Activated naive CD4-positive, alpha-beta T cell treated with anti-CD3 and anti-CD28 coated beads for 36 hours (primary cell): ENCODE measurements at regions of chr11 and their contacts with region 1.

Region 1: DNA sequence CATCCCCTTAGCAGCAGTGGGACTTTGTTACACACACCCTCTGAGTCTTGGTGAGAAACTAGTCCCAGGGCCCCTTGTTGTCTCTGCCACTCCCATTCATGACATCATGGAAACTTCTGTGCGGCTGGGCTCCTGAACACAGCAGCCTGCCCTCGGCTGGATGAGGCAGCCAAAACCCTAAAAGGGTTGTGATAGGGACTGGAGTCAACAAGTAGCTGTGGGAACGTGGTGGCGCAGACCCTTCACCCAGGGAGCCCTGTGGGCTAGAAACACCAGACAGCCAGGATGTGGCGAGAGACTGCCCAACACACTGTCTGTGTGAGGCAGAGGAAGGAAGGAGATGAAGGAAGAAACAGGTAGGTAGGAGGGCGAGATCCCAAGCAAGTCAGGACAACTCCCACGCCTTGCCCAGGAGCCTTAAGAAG is 3.9 kb downstream of the CD3D start:
- DNase-seq: peak; percentile 97
- H3K4me3 Mint-ChIP-seq: peak overlapping the region; percentile 81
- H3K27ac Mint-ChIP-seq: peak overlapping the region; percentile 100
- H3K4me1 Mint-ChIP-seq: peaks cover 43% of the 10 kb centered on the region
- H3K27me3 Mint-ChIP-seq: no peaks in the 10 kb centered on the region

Region 2: GRCh38 chr11:117107701-117108590 is 1230.7 kb before region 1 on chr11:
- CTCF ChIA-PET with region 1: no interaction called
- intact Hi-C with region 1: no loop called
- DNase-seq: no peak
- H3K4me3 Mint-ChIP-seq: no peak overlapping the region
- H3K27ac Mint-ChIP-seq: no peak overlapping the region
- H3K4me1 Mint-ChIP-seq: peaks cover 2% of the 10 kb centered on the region
- H3K27me3 Mint-ChIP-seq: no peaks in the 10 kb centered on the region

Region 3: GRCh38 chr11:118227865-118228785 is 110.5 kb before region 1 on chr11:
- CTCF ChIA-PET with region 1: interaction called, 3 read pairs
- intact Hi-C with region 1: loop called (anchors 1 kb)
- DNase-seq: peak; percentile 30
- H3K4me3 Mint-ChIP-seq: peak overlapping the region; percentile 3
- H3K27ac Mint-ChIP-seq: peak overlapping the region; percentile 89
- H3K4me1 Mint-ChIP-seq: peaks cover 20% of the 10 kb centered on the region
- H3K27me3 Mint-ChIP-seq: no peaks in the 10 kb centered on the region

Region 4: GRCh38 chr11:118304568-118305248 is 33.9 kb before region 1 on chr11 and contains the start of gene CD3E:
- CTCF ChIA-PET with region 1: interaction called, 110 read pairs
- intact Hi-C with region 1: loop called (anchors 1 kb)
- DNase-seq: peak; percentile 88
- H3K4me3 Mint-ChIP-seq: peak within 1 kb of the TSS; percentile 98
- H3K27ac Mint-ChIP-seq: peak within 1 kb of the TSS; percentile 100
- H3K4me1 Mint-ChIP-seq: peaks cover 68% of the 10 kb centered on the region
- H3K27me3 Mint-ChIP-seq: no peaks in the 10 kb centered on the region
- total RNA-seq, gene CD3E: 377 to 415 TPM

Region 5: DNA sequence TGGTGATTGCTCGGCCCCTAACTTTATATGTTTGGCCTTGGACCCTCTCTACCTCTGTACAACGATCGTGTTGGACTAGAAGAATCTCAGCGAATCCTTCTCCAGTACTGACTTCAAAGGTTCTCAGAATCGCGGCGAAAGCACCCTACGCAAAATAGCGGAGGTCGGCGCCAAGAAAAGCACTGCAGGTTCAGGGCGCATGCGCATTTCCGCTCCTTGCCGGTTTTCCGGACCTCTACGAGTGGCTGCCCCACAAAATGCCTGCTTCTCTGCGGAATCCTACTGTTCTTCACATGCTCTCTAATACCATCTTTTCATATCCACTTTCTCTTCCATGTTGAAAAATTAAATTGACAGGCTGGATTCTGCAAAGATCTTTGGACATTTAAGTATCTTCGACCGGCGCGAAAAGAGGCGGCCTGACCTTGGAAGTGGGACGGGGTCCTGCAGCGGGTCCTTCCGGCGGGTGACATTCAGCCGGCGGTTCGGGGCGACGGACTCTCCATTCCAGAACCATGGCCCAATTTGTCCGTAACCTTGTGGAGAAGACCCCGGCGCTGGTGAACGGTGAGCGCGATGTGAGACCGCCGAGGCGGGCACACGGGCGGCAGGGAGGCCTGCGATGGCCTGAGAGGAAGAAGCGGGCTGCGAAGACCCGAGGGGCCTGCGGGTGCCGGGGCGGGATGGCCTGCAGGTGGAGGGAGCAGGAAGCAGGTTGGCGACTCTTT is 62.7 kb after region 1 on chr11 and contains the start of gene ATP5MG:
- CTCF ChIA-PET with region 1: no interaction called
- intact Hi-C with region 1: loop called (anchors 2 kb)
- DNase-seq: peak; percentile 97
- H3K4me3 Mint-ChIP-seq: peak within 1 kb of the TSS; percentile 95
- H3K27ac Mint-ChIP-seq: peak within 1 kb of the TSS; percentile 98
- H3K4me1 Mint-ChIP-seq: peaks cover 58% of the 10 kb centered on the region
- H3K27me3 Mint-ChIP-seq: no peaks in the 10 kb centered on the region
- total RNA-seq, gene ATP5MG: 279 to 284 TPM

Region 6: DNA sequence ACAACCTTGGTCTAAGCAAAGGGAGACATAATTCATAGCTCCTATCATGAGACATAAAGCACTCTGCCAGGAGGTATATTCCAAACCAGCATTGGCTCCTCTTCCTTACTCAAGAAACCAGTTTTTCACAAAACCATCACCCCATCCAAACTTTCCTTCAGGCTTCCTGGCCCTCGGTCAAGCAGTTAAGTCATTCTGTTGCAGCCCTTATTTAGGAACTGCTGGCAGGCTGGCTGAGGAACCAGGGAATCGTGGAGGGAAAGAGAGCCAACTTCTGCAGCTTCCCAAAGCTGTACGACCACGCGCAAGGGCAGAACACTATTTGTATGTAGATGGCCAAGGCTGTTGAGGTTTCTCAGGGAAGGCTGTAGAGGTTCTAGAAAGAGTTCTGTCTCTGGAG is 226.4 kb after region 1 on chr11:
- CTCF ChIA-PET with region 1: no interaction called
- intact Hi-C with region 1: no loop called
- DNase-seq: no peak
- H3K4me3 Mint-ChIP-seq: peak overlapping the region; percentile 70
- H3K27ac Mint-ChIP-seq: no peak overlapping the region
- H3K4me1 Mint-ChIP-seq: peaks cover 24% of the 10 kb centered on the region
- H3K27me3 Mint-ChIP-seq: no peaks in the 10 kb centered on the region